Esophagus muscularis mucosa (tissue), 4 donors: ENCODE measurements at regions of chr1 and their contacts with region 1.

Region 1: DNA sequence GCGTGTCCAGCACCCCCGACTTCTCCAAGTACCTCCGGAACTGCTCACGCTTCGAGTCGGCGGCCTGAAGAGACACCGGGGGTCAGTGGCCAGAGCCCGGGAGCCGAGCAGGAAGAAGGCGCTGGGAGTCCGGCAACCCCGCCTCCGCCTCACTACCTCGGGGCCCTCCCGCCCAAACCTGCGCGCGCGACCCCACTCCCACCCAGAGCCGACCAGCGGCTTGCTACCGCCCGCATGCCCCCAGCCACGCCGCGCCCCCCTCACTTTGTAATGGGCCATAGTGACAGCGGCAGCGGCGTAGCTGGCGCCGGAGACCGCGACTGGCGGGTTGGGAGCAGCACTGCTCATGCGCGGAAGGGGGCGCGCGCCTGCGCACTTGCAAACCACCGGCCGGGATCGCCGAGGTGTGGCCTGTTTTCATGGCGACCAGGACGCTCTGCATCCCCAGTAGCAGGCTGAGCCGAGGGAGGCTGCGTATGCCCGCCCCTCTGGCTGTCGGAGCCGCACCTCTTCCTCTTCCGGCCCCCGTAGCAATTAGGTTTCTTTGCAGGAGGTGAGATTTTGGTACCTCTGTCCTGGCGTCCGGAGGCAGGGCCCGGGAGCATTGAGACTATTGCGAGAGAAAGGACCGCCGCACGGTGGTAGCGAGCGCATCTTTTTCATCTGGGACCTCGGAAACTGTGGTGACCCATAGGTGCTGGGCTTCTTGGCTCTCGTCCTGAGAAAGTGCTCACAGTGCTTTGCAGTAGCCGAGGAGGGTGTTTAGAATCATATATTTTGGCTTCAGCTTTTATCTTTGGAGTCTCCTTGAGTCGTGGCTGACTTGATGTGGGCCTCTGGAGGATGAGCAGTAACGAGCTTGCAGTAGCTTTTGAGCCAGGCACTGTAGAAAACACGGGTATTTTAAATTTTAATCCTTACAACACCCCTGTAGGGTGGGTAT is at the start of gene MYCBP:
- DNase-seq: peak; percentile 98
- H3K4me3 ChIP-seq: peak within 1 kb of the TSS; percentile 62 to 92 (median 86)
- H3K27ac ChIP-seq: peak within 1 kb of the TSS; percentile 68 to 83 (median 76)
- H3K4me1 ChIP-seq: peaks cover 18 to 25% (median 19%) of the 10 kb centered on the region in 4 donors
- H3K27me3 ChIP-seq: no peaks in the 10 kb centered on the region
- CTCF ChIP-seq: peak; percentile 4 to 30 (median 16)
- EP300 ChIP-seq: no peak
- POLR2A ChIP-seq: no peak
- total RNA-seq, gene MYCBP: 17.4 to 22.5 (median 21.2) TPM

Region 2: GRCh38 chr1:38777464-38777957 is 95.8 kb before region 1 on chr1:
- intact Hi-C with region 1: no loop called
- DNase-seq: no peak
- H3K4me3 ChIP-seq: no peak overlapping the region
- H3K27ac ChIP-seq: no peak overlapping the region
- H3K4me1 ChIP-seq: no peaks in the 10 kb centered on the region
- H3K27me3 ChIP-seq: peaks cover 0 to 71% (median 0%) of the 10 kb centered on the region in 4 donors
- CTCF ChIP-seq: no peak
- EP300 ChIP-seq: no peak
- POLR2A ChIP-seq: no peak

Region 3: GRCh38 chr1:38859561-38860453 is 13.5 kb before region 1 on chr1 and contains the start of gene RRAGC:
- intact Hi-C with region 1: loop called (anchors 2 kb)
- DNase-seq: peak; percentile 100
- H3K4me3 ChIP-seq: peak within 1 kb of the TSS; percentile 91 to 97 (median 94)
- H3K27ac ChIP-seq: peak within 1 kb of the TSS; percentile 88 to 96 (median 92)
- H3K4me1 ChIP-seq: peaks cover 25 to 70% (median 62%) of the 10 kb centered on the region in 4 donors
- H3K27me3 ChIP-seq: no peaks in the 10 kb centered on the region
- CTCF ChIP-seq: peak in 1 of 3 experiments; percentile 14
- EP300 ChIP-seq: peak; percentile 14
- POLR2A ChIP-seq: no peak
- total RNA-seq, gene RRAGC: 18.3 to 26.3 (median 22.4) TPM

Region 4: GRCh38 chr1:39081266-39082009 is 208.1 kb after region 1 on chr1:
- intact Hi-C with region 1: loop called (anchors 10 kb)
- DNase-seq: no peak
- H3K4me3 ChIP-seq: peak overlapping the region; percentile 60 to 74 (median 66)
- H3K27ac ChIP-seq: peak overlapping the region in 2 of 4 donors; percentile 36 to 53
- H3K4me1 ChIP-seq: peaks cover 11 to 35% (median 31%) of the 10 kb centered on the region in 4 donors
- H3K27me3 ChIP-seq: peaks cover 0 to 30% (median 13%) of the 10 kb centered on the region in 4 donors
- CTCF ChIP-seq: no peak
- EP300 ChIP-seq: no peak
- POLR2A ChIP-seq: no peak